Natural killer cell (primary cell): ENCODE measurements at regions of chr3 and their contacts with region 1.

Region 1: GRCh38 chr3:63818281-63819150 is 583 bp upstream of the C3orf49 start:
- DNase-seq: peak; percentile 33 to 79
- ATAC-seq: peak; percentile 60 to 74 (median 72)
- H3K4me3 ChIP-seq: no peak overlapping the region
- H3K4me3 Mint-ChIP-seq: no peak overlapping the region
- H3K27ac ChIP-seq: no peak overlapping the region
- H3K27ac Mint-ChIP-seq: no peak overlapping the region
- H3K4me1 ChIP-seq: peaks cover 6% of the 10 kb centered on the region
- H3K4me1 Mint-ChIP-seq: peaks cover 20 to 22% of the 10 kb centered on the region in 2 donors
- H3K27me3 ChIP-seq: no peaks in the 10 kb centered on the region
- H3K27me3 Mint-ChIP-seq: no peaks in the 10 kb centered on the region
- CTCF ChIP-seq: peak; percentile 85

Region 2: DNA sequence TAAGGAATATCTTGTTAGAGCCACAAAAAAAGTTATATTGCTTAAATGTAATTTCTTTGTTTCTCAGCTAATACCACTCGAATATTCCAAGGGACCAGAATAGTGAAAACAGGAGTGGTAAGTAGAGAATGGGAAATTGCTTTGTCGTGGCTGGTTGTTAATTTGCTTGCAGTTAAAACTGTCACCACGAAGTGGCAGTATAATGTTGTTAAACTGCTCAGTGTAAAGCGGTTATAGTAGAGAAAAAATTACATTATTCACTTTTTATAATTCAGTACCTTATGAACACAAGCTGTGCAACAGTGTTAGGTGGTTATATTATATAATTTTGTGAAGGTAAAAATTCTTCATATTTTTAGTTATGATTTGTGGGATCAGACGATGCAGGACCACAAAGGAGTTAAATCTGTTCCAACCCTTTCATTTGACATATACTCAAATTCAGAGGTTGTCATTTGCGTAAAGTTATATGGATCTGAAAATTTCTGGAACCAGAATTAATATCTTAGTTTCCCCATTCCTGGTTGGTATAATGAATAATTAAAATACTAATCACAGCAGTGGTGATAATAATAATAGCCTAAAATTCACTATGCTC is 1617.0 kb before region 1 on chr3:
- intact Hi-C with region 1: loop called (anchors 5 kb)
- DNase-seq: peak in 1 of 2 donors; percentile 22
- ATAC-seq: no peak
- H3K4me3 ChIP-seq: no peak overlapping the region
- H3K4me3 Mint-ChIP-seq: no peak overlapping the region
- H3K27ac ChIP-seq: no peak overlapping the region
- H3K27ac Mint-ChIP-seq: no peak overlapping the region
- H3K4me1 ChIP-seq: no peaks in the 10 kb centered on the region
- H3K4me1 Mint-ChIP-seq: peaks cover 0 to 3% of the 10 kb centered on the region in 2 donors
- H3K27me3 ChIP-seq: no peaks in the 10 kb centered on the region
- H3K27me3 Mint-ChIP-seq: peaks cover 0 to 5% of the 10 kb centered on the region in 2 donors
- CTCF ChIP-seq: peak; percentile 18

Region 3: GRCh38 chr3:62332835-62333244 is 1485.7 kb before region 1 on chr3:
- intact Hi-C with region 1: loop called (anchors 10 kb)
- DNase-seq: peak in 1 of 2 donors; percentile 17
- ATAC-seq: no peak
- H3K4me3 ChIP-seq: no peak overlapping the region
- H3K4me3 Mint-ChIP-seq: no peak overlapping the region
- H3K27ac ChIP-seq: no peak overlapping the region
- H3K27ac Mint-ChIP-seq: no peak overlapping the region
- H3K4me1 ChIP-seq: no peaks in the 10 kb centered on the region
- H3K4me1 Mint-ChIP-seq: no peaks in the 10 kb centered on the region
- H3K27me3 ChIP-seq: no peaks in the 10 kb centered on the region
- H3K27me3 Mint-ChIP-seq: no peaks in the 10 kb centered on the region
- CTCF ChIP-seq: peak; percentile 25

Region 4: GRCh38 chr3:63351236-63351716 is 467.2 kb before region 1 on chr3:
- intact Hi-C with region 1: loop called (anchors 1 kb)
- DNase-seq: peak in 1 of 2 donors; percentile 41
- ATAC-seq: peak in 1 of 3 donors; percentile 45
- H3K4me3 ChIP-seq: no peak overlapping the region
- H3K4me3 Mint-ChIP-seq: no peak overlapping the region
- H3K27ac ChIP-seq: no peak overlapping the region
- H3K27ac Mint-ChIP-seq: no peak overlapping the region
- H3K4me1 ChIP-seq: no peaks in the 10 kb centered on the region
- H3K4me1 Mint-ChIP-seq: no peaks in the 10 kb centered on the region
- H3K27me3 ChIP-seq: no peaks in the 10 kb centered on the region
- H3K27me3 Mint-ChIP-seq: peaks cover 0 to 9% of the 10 kb centered on the region in 2 donors
- CTCF ChIP-seq: peak; percentile 58

Region 5: GRCh38 chr3:63557912-63558311 is 260.6 kb before region 1 on chr3:
- intact Hi-C with region 1: no loop called
- DNase-seq: no peak
- ATAC-seq: no peak
- H3K4me3 ChIP-seq: no peak overlapping the region
- H3K4me3 Mint-ChIP-seq: no peak overlapping the region
- H3K27ac ChIP-seq: no peak overlapping the region
- H3K27ac Mint-ChIP-seq: no peak overlapping the region
- H3K4me1 ChIP-seq: no peaks in the 10 kb centered on the region
- H3K4me1 Mint-ChIP-seq: no peaks in the 10 kb centered on the region
- H3K27me3 ChIP-seq: no peaks in the 10 kb centered on the region
- H3K27me3 Mint-ChIP-seq: no peaks in the 10 kb centered on the region
- CTCF ChIP-seq: no peak